ENCODE measurements at regions of chr4 and their contacts with region 1.

Region 1: GRCh38 chr4:165464813-165465381 is 86.1 kb downstream of the CPE start:
- DNase-seq: no peak
- ATAC-seq: peak; percentile 82
- H3K4me3 ChIP-seq: no peak overlapping the region
- H3K27ac ChIP-seq: no peak overlapping the region
- H3K4me1 ChIP-seq: no peaks in the 10 kb centered on the region
- H3K27me3 ChIP-seq: no peaks in the 10 kb centered on the region
- CTCF ChIP-seq: peak; percentile 83

Region 2: GRCh38 chr4:165124463-165124862 is 340.4 kb before region 1 on chr4:
- intact Hi-C with region 1: loop called (anchors 10 kb)
- DNase-seq: no peak
- ATAC-seq: no peak
- H3K4me3 ChIP-seq: no peak overlapping the region
- H3K27ac ChIP-seq: no peak overlapping the region
- H3K4me1 ChIP-seq: no peaks in the 10 kb centered on the region
- H3K27me3 ChIP-seq: no peaks in the 10 kb centered on the region
- CTCF ChIP-seq: no peak

Region 3: DNA sequence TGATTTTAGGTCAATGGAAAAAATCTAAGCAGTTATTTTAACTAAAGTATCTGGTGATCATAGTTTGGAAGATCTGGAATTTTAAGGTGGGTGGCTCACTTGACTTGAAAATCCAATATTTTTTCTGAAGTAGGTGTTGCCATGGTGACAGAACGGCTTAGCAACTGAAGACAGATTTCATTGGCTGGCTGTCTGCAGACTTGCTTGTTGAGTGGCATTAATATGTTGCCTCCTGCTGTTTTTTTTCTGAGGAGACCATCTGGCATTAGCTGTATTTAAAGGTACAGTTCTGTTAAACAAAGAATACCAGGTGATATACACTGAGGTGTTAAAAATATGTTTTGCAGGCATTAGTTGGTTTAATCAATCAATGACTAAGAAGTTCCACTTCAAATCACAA is 66.3 kb before region 1 on chr4:
- intact Hi-C with region 1: no loop called
- DNase-seq: no peak
- ATAC-seq: no peak
- H3K4me3 ChIP-seq: no peak overlapping the region
- H3K27ac ChIP-seq: no peak overlapping the region
- H3K4me1 ChIP-seq: no peaks in the 10 kb centered on the region
- H3K27me3 ChIP-seq: no peaks in the 10 kb centered on the region
- CTCF ChIP-seq: no peak